CD4-positive, alpha-beta T cell (primary cell): ENCODE measurements at regions of chr10 and their contacts with region 1.

Region 1: GRCh38 chr10:69092959-69093850 is 5.3 kb downstream of the SRGN start:
- DNase-seq: peak; percentile 54 to 96 (median 76)
- ATAC-seq: peak; percentile 33
- H3K4me3 ChIP-seq: no peak overlapping the region
- H3K4me3 Mint-ChIP-seq: peak overlapping the region; percentile 36
- H3K27ac ChIP-seq: peak overlapping the region; percentile 49 to 52
- H3K27ac Mint-ChIP-seq: peak overlapping the region; percentile 94
- H3K4me1 ChIP-seq: peaks cover 60% of the 10 kb centered on the region
- H3K4me1 Mint-ChIP-seq: peaks cover 53% of the 10 kb centered on the region
- H3K27me3 ChIP-seq: no peaks in the 10 kb centered on the region
- H3K27me3 Mint-ChIP-seq: no peaks in the 10 kb centered on the region
- CTCF ChIP-seq: peak; percentile 88

Region 2: GRCh38 chr10:68988530-68989316 is 104.5 kb before region 1 on chr10 and contains the start of gene KIFBP:
- CTCF ChIA-PET with region 1: interaction called, 4 read pairs
- POLR2A ChIA-PET with region 1: interaction called, 8 read pairs
- intact Hi-C with region 1: loop called in 1 of 2 experiments (anchors 1 kb)
- DNase-seq: peak; percentile 60 to 95 (median 74)
- ATAC-seq: peak; percentile 81
- H3K4me3 ChIP-seq: peak within 1 kb of the TSS; percentile 90
- H3K4me3 Mint-ChIP-seq: peak within 1 kb of the TSS; percentile 98
- H3K27ac ChIP-seq: peak within 1 kb of the TSS; percentile 55 to 69
- H3K27ac Mint-ChIP-seq: peak within 1 kb of the TSS; percentile 88
- H3K4me1 ChIP-seq: peaks cover 39% of the 10 kb centered on the region
- H3K4me1 Mint-ChIP-seq: peaks cover 58% of the 10 kb centered on the region
- H3K27me3 ChIP-seq: no peaks in the 10 kb centered on the region
- H3K27me3 Mint-ChIP-seq: no peaks in the 10 kb centered on the region
- CTCF ChIP-seq: peak; percentile 43
- total RNA-seq, gene KIFBP: 4.2 TPM

Region 3: GRCh38 chr10:69123747-69124562 is 30.8 kb after region 1 on chr10 and contains the start of gene VPS26A:
- CTCF ChIA-PET with region 1: interaction called, 4 read pairs
- POLR2A ChIA-PET with region 1: interaction called, 4 read pairs
- intact Hi-C with region 1: loop called (anchors 1 kb)
- DNase-seq: peak; percentile 97 to 99 (median 98)
- ATAC-seq: peak; percentile 94
- H3K4me3 ChIP-seq: peak within 1 kb of the TSS; percentile 90
- H3K4me3 Mint-ChIP-seq: peak within 1 kb of the TSS; percentile 97
- H3K27ac ChIP-seq: peak within 1 kb of the TSS; percentile 92 to 95
- H3K27ac Mint-ChIP-seq: peak within 1 kb of the TSS; percentile 98
- H3K4me1 ChIP-seq: peaks cover 35% of the 10 kb centered on the region
- H3K4me1 Mint-ChIP-seq: peaks cover 27% of the 10 kb centered on the region
- H3K27me3 ChIP-seq: no peaks in the 10 kb centered on the region
- H3K27me3 Mint-ChIP-seq: no peaks in the 10 kb centered on the region
- CTCF ChIP-seq: peak; percentile 48
- total RNA-seq, gene VPS26A: 32.8 to 33.0 TPM